Calu3 (cell line): ENCODE measurements at regions of chr7 and their contacts with region 1.

Region 1: DNA sequence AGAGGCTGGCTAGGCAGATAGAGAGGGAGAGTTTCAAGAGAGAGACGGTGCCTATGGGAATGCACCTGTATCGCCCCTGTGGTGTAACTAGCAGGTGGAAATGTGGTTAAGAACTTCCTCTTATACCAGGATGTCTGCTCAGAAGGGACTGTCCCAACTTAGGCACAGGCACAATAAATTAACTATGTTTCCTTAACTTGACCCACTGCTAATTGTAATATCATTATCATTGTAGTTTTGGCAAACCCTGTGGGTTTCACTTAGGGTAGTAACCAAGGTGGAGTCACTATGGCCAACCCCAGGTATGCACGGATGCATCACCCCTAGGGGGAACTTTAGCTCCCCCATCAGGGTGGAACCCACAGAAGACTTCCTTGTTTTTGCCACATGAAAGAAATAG is 455.7 kb downstream of the DGKB start:
- DNase-seq: peak; percentile 56
- H3K4me3 Mint-ChIP-seq: no peak overlapping the region
- H3K27ac Mint-ChIP-seq: peak overlapping the region; percentile 60
- H3K4me1 Mint-ChIP-seq: peaks cover 15% of the 10 kb centered on the region
- H3K27me3 Mint-ChIP-seq: no peaks in the 10 kb centered on the region
- CTCF ChIP-seq: no peak

Region 2: GRCh38 chr7:13850185-13850752 is 596.6 kb before region 1 on chr7:
- CTCF ChIA-PET with region 1: no interaction called
- intact Hi-C with region 1: loop called (anchors 5 kb)
- DNase-seq: peak; percentile 64
- H3K4me3 Mint-ChIP-seq: peak overlapping the region; percentile 1
- H3K27ac Mint-ChIP-seq: peak overlapping the region; percentile 37
- H3K4me1 Mint-ChIP-seq: peaks cover 20% of the 10 kb centered on the region
- H3K27me3 Mint-ChIP-seq: no peaks in the 10 kb centered on the region
- CTCF ChIP-seq: no peak

Region 3: GRCh38 chr7:14104861-14105260 is 342.0 kb before region 1 on chr7:
- CTCF ChIA-PET with region 1: no interaction called
- intact Hi-C with region 1: no loop called
- DNase-seq: no peak
- H3K4me3 Mint-ChIP-seq: no peak overlapping the region
- H3K27ac Mint-ChIP-seq: no peak overlapping the region
- H3K4me1 Mint-ChIP-seq: no peaks in the 10 kb centered on the region
- H3K27me3 Mint-ChIP-seq: no peaks in the 10 kb centered on the region
- CTCF ChIP-seq: no peak

Region 4: DNA sequence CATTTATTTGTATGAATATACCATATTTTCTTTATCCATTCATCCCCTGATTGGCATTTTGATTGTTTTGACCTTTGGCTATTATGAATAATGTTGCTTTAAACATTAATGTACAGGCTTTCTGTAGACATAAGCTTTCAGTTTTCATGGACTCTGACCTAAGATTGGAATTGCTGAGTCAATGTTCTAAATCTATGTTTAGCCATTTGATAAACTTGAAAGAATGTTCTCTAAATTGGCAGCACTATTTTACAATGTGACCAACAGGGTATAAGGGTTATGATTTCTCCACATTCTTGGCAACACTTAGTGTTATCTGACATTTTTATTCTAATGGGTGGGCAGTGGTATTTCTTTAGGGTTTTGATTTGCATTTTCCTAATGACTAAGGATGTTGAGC is 227.7 kb before region 1 on chr7:
- CTCF ChIA-PET with region 1: no interaction called
- intact Hi-C with region 1: loop called (anchors 5 kb)
- DNase-seq: no peak
- H3K4me3 Mint-ChIP-seq: no peak overlapping the region
- H3K27ac Mint-ChIP-seq: peak overlapping the region; percentile 55
- H3K4me1 Mint-ChIP-seq: peaks cover 26% of the 10 kb centered on the region
- H3K27me3 Mint-ChIP-seq: no peaks in the 10 kb centered on the region
- CTCF ChIP-seq: no peak

Region 5: DNA sequence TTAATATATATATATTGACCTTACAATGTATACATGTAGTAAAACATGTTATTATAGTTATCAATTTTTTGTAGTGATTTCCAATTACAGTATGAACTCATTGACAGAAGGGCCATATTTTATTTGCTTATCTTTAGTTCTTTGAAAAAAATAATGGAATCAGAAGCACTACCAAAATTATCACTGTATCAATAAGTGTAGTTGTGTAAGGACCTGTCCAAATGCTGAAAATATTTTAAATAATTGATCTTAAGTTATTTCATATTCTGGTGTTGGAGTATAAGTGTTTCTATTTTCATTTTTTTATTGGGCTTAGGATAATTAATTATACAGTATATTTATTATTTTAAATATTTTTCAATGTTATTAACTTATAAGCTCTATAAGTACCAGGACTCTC is 464.2 kb after region 1 on chr7:
- CTCF ChIA-PET with region 1: no interaction called
- intact Hi-C with region 1: no loop called
- DNase-seq: no peak
- H3K4me3 Mint-ChIP-seq: no peak overlapping the region
- H3K27ac Mint-ChIP-seq: no peak overlapping the region
- H3K4me1 Mint-ChIP-seq: no peaks in the 10 kb centered on the region
- H3K27me3 Mint-ChIP-seq: no peaks in the 10 kb centered on the region
- CTCF ChIP-seq: no peak